HEK293 (cell line): ENCODE measurements at regions of chr18 and their contacts with region 1.

Region 1: GRCh38 chr18:63994783-63995399 is 25.0 kb downstream of the SERPINB8 start:
- H3K4me3 ChIP-seq: no peak overlapping the region
- H3K27ac ChIP-seq: no peak overlapping the region
- H3K4me1 ChIP-seq: no peaks in the 10 kb centered on the region
- CTCF ChIP-seq: peak; percentile 48

Region 2: DNA sequence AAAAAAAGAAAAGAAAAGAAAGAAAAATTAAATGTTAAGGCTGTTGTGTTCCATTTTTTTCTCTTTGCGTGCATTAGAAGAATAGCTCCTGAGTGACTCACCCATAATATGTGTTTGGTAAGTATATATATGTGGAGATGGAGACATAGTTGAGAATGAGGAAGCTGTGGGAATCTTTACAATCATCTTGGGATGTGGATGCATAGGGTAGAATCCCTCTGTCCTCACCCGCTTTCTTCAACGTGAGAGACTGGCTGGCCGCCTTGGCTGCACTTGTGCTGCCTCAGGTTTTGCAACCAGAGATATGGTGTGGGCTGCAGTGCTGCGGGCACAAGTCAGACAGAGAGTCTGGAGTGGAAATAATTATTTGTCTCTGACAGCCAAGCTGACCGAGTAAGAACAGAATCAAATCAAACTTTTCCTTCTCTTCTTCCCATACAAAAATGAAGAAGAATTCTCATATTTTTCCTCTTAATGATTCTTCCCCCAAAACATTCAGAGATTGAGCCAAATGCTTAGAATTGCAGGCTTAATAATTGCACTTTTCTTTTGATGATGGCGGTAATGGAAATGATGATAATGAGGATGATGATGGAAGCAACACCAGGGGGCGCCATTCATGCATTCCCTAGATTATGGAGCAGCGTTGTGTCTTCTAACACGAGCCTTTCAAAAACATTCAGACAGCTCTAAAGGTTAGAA is 171.2 kb before region 1 on chr18:
- CTCF ChIA-PET with region 1: interaction called, 11 read pairs
- POLR2A ChIA-PET with region 1: no interaction called
- H3K4me3 ChIP-seq: no peak overlapping the region
- H3K27ac ChIP-seq: no peak overlapping the region
- H3K4me1 ChIP-seq: no peaks in the 10 kb centered on the region
- CTCF ChIP-seq: peak; percentile 15; the same call in 1 of the 2 replicates

Region 3: GRCh38 chr18:63963615-63964256 is 31.2 kb before region 1 on chr18:
- CTCF ChIA-PET with region 1: interaction called, 49 read pairs
- POLR2A ChIA-PET with region 1: no interaction called
- H3K4me3 ChIP-seq: no peak overlapping the region
- H3K27ac ChIP-seq: no peak overlapping the region
- H3K4me1 ChIP-seq: no peaks in the 10 kb centered on the region
- CTCF ChIP-seq: 0 out of 2 replicates have a peak, but pooled peaks have one; percentile 22

Region 4: GRCh38 chr18:63979409-63979920 is 15.4 kb before region 1 on chr18:
- CTCF ChIA-PET with region 1: interaction called, 41 read pairs
- POLR2A ChIA-PET with region 1: no interaction called
- H3K4me3 ChIP-seq: no peak overlapping the region
- H3K27ac ChIP-seq: no peak overlapping the region
- H3K4me1 ChIP-seq: no peaks in the 10 kb centered on the region
- CTCF ChIP-seq: peak; percentile 52; the same call in 1 of the 2 replicates

Region 5: DNA sequence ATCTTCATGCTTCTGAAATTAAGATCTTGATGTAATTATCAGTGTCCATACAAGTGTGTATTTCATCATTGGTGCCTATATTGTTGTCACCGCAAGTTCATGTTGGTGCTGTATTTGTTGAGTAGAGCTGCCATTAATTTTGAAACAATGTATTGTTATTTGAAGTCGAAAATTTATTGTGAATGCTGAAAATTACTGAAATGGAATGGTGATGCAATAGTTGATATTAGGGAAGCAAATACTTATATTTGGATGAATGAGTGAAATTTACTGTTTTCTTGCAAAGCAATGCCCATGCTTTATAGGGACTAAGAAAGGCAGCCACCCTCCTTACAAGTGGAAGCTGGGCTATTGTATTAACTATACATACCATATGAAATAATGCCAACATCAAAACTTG is 16.6 kb after region 1 on chr18:
- CTCF ChIA-PET with region 1: interaction called, 15 read pairs
- POLR2A ChIA-PET with region 1: no interaction called
- H3K4me3 ChIP-seq: no peak overlapping the region
- H3K27ac ChIP-seq: no peak overlapping the region
- H3K4me1 ChIP-seq: no peaks in the 10 kb centered on the region
- CTCF ChIP-seq: no peak

Region 6: GRCh38 chr18:64127172-64127571 is 132.3 kb after region 1 on chr18:
- CTCF ChIA-PET with region 1: no interaction called
- POLR2A ChIA-PET with region 1: no interaction called
- H3K4me3 ChIP-seq: no peak overlapping the region
- H3K27ac ChIP-seq: no peak overlapping the region
- H3K4me1 ChIP-seq: no peaks in the 10 kb centered on the region
- CTCF ChIP-seq: no peak

Region 7: DNA sequence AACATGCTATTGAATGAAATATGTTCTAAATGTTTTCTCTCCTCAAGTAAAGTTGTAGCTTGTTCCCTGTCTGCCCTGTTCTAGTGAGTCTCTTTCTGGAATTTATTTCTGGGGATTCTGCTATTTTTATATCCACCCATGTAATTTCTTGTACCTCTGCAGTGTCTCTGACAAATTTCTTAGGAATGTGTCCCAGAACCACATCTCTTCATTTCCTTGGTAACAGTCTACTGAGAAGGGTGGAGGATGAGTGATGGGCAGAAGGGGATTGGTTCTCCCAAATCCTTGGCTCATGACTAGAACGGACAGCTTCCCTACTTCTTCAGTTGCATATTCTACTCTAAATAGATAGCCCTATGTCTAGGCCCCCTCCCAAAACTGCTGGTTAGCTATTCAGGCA is 644.6 kb after region 1 on chr18:
- CTCF ChIA-PET with region 1: no interaction called
- POLR2A ChIA-PET with region 1: no interaction called
- H3K4me3 ChIP-seq: no peak overlapping the region
- H3K27ac ChIP-seq: no peak overlapping the region
- H3K4me1 ChIP-seq: no peaks in the 10 kb centered on the region
- CTCF ChIP-seq: no peak

Region 8: DNA sequence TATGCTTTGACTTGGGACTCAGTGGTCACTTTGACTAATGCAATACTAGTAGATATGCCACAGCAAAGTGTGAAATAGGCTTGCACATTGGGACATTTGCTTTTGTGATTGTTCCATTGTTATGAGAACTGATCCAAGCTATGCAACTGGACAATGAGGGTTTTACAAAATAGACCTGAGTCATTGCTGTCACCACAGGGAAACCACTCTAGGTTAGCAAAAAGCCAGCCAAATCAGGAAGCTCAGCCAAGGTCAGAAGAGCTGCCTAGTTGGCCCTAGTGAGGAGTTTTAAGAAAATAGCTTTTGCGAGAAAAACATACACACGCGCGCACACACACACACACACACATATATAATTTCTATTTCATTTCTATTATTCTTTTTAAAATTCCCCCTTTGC is 1303.5 kb after region 1 on chr18:
- CTCF ChIA-PET with region 1: no interaction called
- POLR2A ChIA-PET with region 1: no interaction called
- H3K4me3 ChIP-seq: no peak overlapping the region
- H3K27ac ChIP-seq: no peak overlapping the region
- H3K4me1 ChIP-seq: no peaks in the 10 kb centered on the region
- CTCF ChIP-seq: no peak